WTC11 (cell line): ENCODE measurements at regions of chrX and their contacts with region 1.

Region 1: DNA sequence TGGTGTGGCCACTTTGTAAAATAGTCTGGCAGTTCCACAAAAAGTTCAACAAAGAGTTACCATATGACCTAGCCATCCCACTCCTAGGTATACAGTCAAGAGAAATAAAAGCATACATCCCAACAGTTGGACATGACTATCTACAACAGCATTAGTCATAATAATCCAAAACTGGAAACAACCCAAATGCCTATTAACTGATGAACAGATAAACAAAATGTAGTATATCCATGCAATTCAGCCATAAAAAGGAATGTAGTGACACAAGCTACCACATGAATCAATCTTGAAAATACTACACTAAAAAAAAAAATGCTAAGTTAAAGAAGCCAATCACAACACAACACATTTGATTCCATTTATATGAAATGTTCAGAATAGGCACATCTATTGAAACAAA is 16.1 kb downstream of the MED14 start:
- DNase-seq: no peak
- ATAC-seq: no peak
- H3K4me3 Mint-ChIP-seq: no peak overlapping the region
- H3K27ac Mint-ChIP-seq: no peak overlapping the region
- H3K4me1 Mint-ChIP-seq: peaks cover 21% of the 10 kb centered on the region
- H3K27me3 Mint-ChIP-seq: no peaks in the 10 kb centered on the region
- CTCF ChIP-seq: no peak

Region 2: GRCh38 chrX:41100200-41100599 is 381.0 kb after region 1 on chrX:
- CTCF ChIA-PET with region 1: no interaction called
- POLR2A ChIA-PET with region 1: interaction called, 10 read pairs
- DNase-seq: no peak
- ATAC-seq: no peak
- H3K4me3 Mint-ChIP-seq: peak overlapping the region; percentile 2; the same call in 1 of the 2 replicates
- H3K27ac Mint-ChIP-seq: no peak overlapping the region
- H3K4me1 Mint-ChIP-seq: peaks cover 57% of the 10 kb centered on the region
- H3K27me3 Mint-ChIP-seq: no peaks in the 10 kb centered on the region; the same call in 1 of the 2 replicates
- CTCF ChIP-seq: no peak